ENCODE measurements at regions of chr2 and their contacts with region 1.

Region 1: DNA sequence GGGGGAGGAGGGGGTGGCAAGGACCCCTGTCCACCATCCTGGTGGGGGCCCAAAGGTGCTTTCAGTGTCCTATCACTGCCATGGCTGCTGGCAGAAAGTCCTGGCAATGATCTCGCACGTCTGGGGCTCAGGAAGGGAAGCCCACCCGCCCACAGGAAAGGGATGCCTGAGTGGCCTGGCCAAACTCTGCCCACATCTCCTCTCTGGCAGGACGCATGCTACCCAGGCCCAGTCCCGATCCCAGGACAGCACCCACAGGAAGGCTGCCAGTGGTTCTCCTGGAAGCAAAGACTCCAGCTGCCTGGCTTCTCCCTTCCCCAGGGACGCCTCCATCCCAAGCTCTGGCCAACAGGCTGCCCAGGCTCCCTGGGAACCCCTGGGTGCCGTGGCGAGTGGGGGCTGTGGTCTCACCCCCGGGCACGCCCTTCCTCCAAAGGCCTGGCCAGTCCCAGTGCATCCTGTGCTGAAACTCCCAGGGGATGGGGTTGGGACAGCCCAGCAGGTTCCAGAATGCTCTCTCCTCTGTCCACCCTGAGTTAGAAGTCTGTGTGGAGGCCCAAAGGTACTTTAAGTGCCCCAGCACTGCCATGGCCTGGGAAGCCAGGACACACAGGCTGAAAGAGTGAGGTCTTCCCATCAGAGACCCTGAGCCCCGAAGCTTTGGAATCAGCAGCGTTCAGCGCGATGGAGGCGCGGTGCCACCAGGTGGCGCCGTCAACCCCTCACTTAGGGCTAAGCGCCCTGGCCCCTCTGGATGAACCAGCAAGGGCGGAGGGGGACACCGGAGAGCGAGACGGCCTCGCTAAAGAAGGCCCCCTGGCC is 29.8 kb upstream of the TAF1B start:
- DNase-seq: peak; percentile 64 to 86
- ATAC-seq: peak; percentile 86 to 96
- H3K4me3 ChIP-seq: 0 out of 3 replicates have a peak overlapping the region, but pooled peaks have one; percentile 17
- H3K27ac ChIP-seq: peak overlapping the region; percentile 36 to 43; a peak in 5 of 6 replicates
- H3K4me1 ChIP-seq: peaks cover 7% of the 10 kb centered on the region; the same call in 2 of the 3 replicates
- CTCF ChIP-seq: peak; percentile 98
- EP300 ChIP-seq: no peak
- POLR2A ChIP-seq: no peak
- RAD21 ChIP-seq: peak; percentile 90 to 93

Region 2: GRCh38 chr2:9735335-9735734 is 78.2 kb before region 1 on chr2:
- CTCF ChIA-PET with region 1: no interaction called
- POLR2A ChIA-PET with region 1: no interaction called
- DNase-seq: no peak
- ATAC-seq: no peak
- H3K4me3 ChIP-seq: no peak overlapping the region
- H3K27ac ChIP-seq: no peak overlapping the region
- H3K4me1 ChIP-seq: no peaks in the 10 kb centered on the region
- CTCF ChIP-seq: no peak
- EP300 ChIP-seq: no peak
- POLR2A ChIP-seq: no peak
- RAD21 ChIP-seq: no peak

Region 3: GRCh38 chr2:9799665-9800632 is 13.6 kb before region 1 on chr2:
- CTCF ChIA-PET with region 1: interaction called, 262 read pairs
- POLR2A ChIA-PET with region 1: no interaction called
- DNase-seq: peak; percentile 85 to 93
- ATAC-seq: peak; percentile 75 to 92
- H3K4me3 ChIP-seq: no peak overlapping the region
- H3K27ac ChIP-seq: peak overlapping the region; percentile 34 to 87; a peak in 5 of 6 replicates
- H3K4me1 ChIP-seq: peaks cover 30% of the 10 kb centered on the region
- CTCF ChIP-seq: peak; percentile 98
- EP300 ChIP-seq: no peak
- POLR2A ChIP-seq: no peak
- RAD21 ChIP-seq: peak; percentile 92 to 97

Region 4: DNA sequence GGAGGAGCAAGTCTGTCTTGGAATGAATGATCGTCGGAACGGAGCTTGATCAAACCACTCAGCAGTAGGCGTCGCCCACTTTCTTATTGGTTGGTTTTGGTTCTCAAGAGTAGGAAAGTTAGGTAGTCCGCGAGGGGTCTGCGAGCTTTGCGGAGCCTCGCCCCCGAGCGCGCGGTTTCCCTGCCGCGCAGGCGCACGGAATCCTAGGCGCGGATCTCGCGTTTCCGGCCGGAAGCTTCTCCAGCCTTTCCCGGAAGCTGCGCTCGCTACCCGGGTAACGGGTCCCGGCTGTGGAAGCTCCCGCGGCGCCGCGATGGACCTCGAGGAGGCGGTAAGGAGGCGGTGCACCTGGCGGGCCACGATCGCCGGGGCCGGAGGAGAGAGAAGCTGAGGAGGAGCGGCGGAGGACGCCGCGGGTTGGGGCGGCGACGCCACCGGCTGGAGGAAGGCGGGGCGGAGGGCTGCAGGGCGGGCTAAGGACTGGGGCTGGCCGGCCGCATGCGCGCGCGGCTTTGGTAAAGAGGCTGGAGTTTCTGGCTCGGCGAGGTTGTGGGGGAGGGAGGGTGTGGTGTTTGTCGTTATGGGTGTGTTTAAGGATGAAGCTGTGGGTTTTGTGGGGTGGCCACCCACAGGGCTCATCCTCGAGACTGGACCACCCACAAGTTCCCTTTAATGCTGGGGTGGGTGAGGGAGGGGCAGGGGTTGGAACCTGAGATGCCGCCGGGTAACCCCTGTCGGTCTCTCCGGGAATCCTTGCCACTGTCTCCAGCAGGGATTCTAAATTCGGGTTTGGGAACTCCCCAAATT is 29.9 kb after region 1 on chr2 and contains the start of gene TAF1B:
- CTCF ChIA-PET with region 1: interaction called, 42 read pairs
- POLR2A ChIA-PET with region 1: interaction called, 10 read pairs
- DNase-seq: peak; percentile 95 to 96
- ATAC-seq: peak; percentile 96 to 97
- H3K4me3 ChIP-seq: peak within 1 kb of the TSS; percentile 73
- H3K27ac ChIP-seq: peak within 1 kb of the TSS; percentile 95
- H3K4me1 ChIP-seq: peaks cover 18% of the 10 kb centered on the region; the same call in 2 of the 3 replicates
- CTCF ChIP-seq: no peak
- EP300 ChIP-seq: no peak
- POLR2A ChIP-seq: peak; percentile 76
- RAD21 ChIP-seq: no peak
- polyA plus RNA-seq, gene TAF1B: 40.8 and 51.7 TPM in 2 replicates

Region 5: GRCh38 chr2:9909106-9909505 is 95.6 kb after region 1 on chr2:
- CTCF ChIA-PET with region 1: interaction called, 58 read pairs
- POLR2A ChIA-PET with region 1: no interaction called
- DNase-seq: no peak
- ATAC-seq: no peak
- H3K4me3 ChIP-seq: no peak overlapping the region
- H3K27ac ChIP-seq: no peak overlapping the region
- H3K4me1 ChIP-seq: peaks cover 1% of the 10 kb centered on the region
- CTCF ChIP-seq: no peak
- EP300 ChIP-seq: no peak
- POLR2A ChIP-seq: no peak
- RAD21 ChIP-seq: no peak

Region 6: DNA sequence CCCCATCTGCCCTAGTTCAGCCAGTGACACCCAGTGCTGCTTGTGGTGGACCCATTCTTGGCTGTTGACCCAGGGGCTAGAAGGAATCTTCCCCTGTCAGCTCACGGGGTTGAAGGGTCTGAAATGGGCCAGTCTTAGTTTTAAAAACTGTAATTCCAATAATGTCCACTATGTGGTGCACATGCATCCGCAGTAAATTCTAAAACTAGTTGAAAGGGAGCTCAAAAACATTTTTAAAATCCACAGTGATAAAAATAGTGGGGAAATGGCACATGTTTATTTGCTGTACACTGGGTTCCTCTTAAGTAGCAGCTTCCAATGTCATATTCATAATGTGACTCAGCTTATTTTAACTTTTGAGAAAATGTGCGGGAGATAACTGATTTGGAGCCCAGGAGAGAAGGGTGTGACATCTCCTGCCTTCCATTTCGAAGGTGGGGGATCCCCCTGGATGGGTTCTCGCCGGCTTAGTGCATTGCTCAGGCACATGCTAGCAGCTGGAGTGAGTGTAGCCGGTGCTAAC is 170.8 kb after region 1 on chr2:
- CTCF ChIA-PET with region 1: interaction called, 21 read pairs
- POLR2A ChIA-PET with region 1: no interaction called
- DNase-seq: peak; percentile 46 to 90
- ATAC-seq: peak; percentile 63 to 89
- H3K4me3 ChIP-seq: no peak overlapping the region
- H3K27ac ChIP-seq: no peak overlapping the region
- H3K4me1 ChIP-seq: 0 out of 3 replicates have a peak, but pooled peaks cover 3% of the 10 kb centered on the region
- CTCF ChIP-seq: peak; percentile 77
- EP300 ChIP-seq: no peak
- POLR2A ChIP-seq: no peak
- RAD21 ChIP-seq: peak; percentile 61 to 66

Region 7: DNA sequence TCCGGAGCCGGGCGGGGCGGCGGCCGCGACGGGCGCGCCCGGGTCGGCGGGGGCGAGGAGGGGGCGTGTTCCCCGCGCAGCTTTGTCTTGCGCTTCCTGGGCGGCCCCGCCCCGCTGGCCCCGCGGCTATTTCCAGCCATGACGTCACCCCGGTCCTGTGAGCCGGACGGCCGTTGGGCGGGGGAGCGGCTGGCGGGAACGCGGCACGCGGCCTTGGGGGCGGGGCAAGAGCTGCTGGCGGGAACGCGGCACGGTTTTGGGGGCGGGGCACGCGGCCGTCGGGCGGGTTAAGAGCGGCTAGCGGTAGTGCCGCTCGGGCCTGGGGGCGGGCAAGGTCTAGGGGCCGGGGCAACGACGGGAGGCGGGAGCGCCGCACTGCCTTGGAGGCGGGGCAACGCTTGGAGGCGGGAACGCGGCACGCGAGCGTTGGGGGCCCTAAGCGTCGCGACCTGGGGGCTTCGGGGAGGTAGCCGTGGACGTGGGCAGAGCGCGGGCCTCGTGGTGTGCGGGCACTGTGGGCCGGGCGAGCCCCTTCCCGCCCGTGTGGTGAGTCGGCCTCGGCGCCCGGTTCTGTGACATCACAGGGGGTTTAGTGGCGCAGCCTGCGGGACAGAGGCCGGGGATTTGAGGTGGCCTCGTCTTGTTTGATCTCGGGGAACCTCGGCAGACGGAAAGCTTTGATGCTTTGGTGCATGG is 230.5 kb after region 1 on chr2:
- CTCF ChIA-PET with region 1: interaction called, 232 read pairs
- POLR2A ChIA-PET with region 1: no interaction called
- DNase-seq: peak; percentile 79 to 93
- ATAC-seq: peak; percentile 48 to 61
- H3K4me3 ChIP-seq: peak overlapping the region; percentile 89
- H3K27ac ChIP-seq: peak overlapping the region; percentile 87 to 90
- H3K4me1 ChIP-seq: no peaks in the 10 kb centered on the region; the same call in 2 of the 3 replicates
- CTCF ChIP-seq: no peak
- EP300 ChIP-seq: no peak
- POLR2A ChIP-seq: no peak
- RAD21 ChIP-seq: no peak

Region 8: DNA sequence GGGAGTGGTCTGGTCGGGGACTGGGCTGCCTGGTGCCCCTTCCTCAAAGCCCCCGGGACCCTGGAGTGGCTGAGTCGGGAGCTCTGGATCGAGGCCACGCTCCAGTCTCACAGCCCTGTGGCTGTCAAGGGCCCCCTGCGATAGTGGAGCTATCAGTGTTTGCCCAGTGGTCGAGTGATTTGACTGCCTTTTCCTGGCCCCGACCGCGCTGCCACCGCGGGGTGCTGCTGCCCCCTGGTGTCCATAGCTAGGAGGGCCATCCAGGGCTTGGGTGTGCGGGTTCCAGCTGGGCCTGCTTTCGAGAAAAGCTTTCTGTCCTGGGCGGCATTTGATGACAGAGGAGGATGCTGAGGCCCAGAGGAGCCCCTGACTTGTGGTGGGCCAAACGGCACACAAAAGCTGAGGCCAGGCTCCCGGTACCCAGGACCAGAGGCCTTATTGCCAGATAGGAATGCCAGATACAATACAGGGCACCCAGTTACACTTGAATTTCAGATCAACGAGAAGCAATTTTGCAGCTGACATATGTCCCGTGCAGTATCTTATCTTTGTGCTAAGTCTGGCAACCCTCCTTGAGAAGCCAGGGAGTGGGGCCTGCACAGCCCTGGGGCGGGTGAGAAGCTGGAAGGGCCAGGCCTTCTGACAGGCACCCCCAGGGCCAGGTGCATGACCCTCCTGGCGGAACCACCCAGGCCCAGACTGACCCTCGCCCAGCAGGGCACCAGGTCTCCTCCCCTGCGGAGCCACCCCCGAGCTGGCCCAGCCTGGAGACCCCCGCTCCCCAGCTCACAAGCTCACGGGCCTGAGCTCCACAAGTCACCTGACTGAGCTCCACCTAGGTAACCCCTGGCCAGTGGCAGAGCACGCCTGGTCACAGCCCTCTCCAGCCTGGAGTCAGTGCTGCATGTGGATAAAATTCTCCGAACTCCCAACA is 621.6 kb after region 1 on chr2:
- CTCF ChIA-PET with region 1: interaction called, 13 read pairs
- POLR2A ChIA-PET with region 1: no interaction called
- DNase-seq: peak; percentile 80 to 91
- ATAC-seq: peak; percentile 60 to 87
- H3K4me3 ChIP-seq: no peak overlapping the region
- H3K27ac ChIP-seq: peak overlapping the region in 1 of 2 experiments; percentile 68; a peak in 4 of 6 replicates
- H3K4me1 ChIP-seq: peaks cover 18% of the 10 kb centered on the region
- CTCF ChIP-seq: peak; percentile 99
- EP300 ChIP-seq: no peak
- POLR2A ChIP-seq: no peak
- RAD21 ChIP-seq: peak; percentile 100